ENCODE measurements at regions of chr14 and their contacts with region 1.

Region 1: DNA sequence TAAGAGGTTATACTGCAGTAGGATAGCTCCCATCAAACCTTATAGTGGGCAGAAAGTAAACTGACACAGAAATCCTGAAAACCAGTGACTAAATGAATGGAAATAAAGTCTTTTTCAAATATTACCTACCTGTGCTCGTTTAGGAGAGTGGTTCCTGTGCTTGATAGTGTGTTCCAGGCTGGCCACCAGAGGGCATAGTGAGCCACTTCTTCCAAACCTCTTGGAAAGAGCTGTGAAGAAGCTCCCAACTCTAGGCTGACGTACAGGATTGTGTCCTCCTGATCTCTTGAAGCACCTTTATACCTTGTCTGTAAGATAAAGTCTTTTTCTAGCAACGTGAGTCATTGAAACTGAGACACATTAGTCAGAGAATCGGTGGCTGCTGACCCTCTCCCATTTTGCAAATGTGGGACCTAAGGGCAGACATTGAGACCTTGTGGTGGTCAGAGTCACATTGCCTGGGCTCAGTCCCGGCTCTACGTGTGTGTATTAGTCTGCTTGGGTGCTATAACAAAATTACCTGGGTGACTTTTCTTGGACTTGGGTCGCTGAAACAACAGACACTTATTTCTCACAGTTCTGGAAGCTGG is 17.6 kb downstream of the TDP1 start:
- DNase-seq: peak; percentile 56
- ATAC-seq: peak; percentile 96
- H3K4me3 ChIP-seq: no peak overlapping the region
- H3K27ac ChIP-seq: no peak overlapping the region
- H3K4me1 ChIP-seq: no peaks in the 10 kb centered on the region
- H3K27me3 ChIP-seq: no peaks in the 10 kb centered on the region
- CTCF ChIP-seq: peak; percentile 82
- EP300 ChIP-seq: no peak
- POLR2A ChIP-seq: no peak
- RAD21 ChIP-seq: no peak

Region 2: DNA sequence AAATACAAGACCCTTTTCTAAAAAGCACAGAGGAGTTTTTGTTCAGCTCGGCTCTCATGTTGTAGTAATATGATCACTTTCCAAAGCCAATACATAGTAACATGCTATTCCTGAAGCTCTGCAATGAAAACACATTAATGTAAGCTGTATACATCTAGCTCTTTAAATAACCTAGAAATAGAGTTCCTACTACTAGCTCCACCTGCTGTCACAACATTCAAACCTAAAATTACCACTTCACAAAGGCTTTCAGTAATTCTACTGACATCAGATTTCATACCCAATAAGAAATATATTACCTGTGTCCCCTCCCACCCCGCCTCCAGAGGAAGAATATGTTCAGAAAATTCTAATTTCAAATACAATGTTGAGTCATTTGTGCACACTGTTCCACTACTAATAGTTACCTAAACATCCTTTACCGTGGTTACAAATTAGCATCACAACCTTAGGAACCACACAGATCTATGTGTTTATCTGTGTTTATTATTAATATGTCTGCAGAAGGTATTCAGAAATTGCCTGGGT is 36.6 kb before region 1 on chr14:
- CTCF ChIA-PET with region 1: no interaction called
- POLR2A ChIA-PET with region 1: no interaction called
- in situ Hi-C with region 1: no loop called
- intact Hi-C with region 1: loop called (anchors 1 kb)
- DNase-seq: no peak
- ATAC-seq: no peak
- H3K4me3 ChIP-seq: no peak overlapping the region
- H3K27ac ChIP-seq: no peak overlapping the region
- H3K4me1 ChIP-seq: no peaks in the 10 kb centered on the region
- H3K27me3 ChIP-seq: no peaks in the 10 kb centered on the region
- CTCF ChIP-seq: 0 out of 2 replicates have a peak, but pooled peaks have one; percentile 10
- EP300 ChIP-seq: no peak
- POLR2A ChIP-seq: no peak
- RAD21 ChIP-seq: no peak

Region 3: GRCh38 chr14:90060312-90060964 is 87.1 kb after region 1 on chr14:
- CTCF ChIA-PET with region 1: interaction called, 10 read pairs
- POLR2A ChIA-PET with region 1: no interaction called
- in situ Hi-C with region 1: loop called (anchors 5 kb)
- intact Hi-C with region 1: loop called (anchors 1 kb)
- DNase-seq: peak; percentile 34
- ATAC-seq: peak; percentile 84
- H3K4me3 ChIP-seq: peak overlapping the region; percentile 51 to 72 (median 60)
- H3K27ac ChIP-seq: no peak overlapping the region
- H3K4me1 ChIP-seq: peaks cover 24% of the 10 kb centered on the region
- H3K27me3 ChIP-seq: peaks cover 3 to 37% of the 10 kb centered on the region in 2 experiments
- CTCF ChIP-seq: peak; percentile 79
- EP300 ChIP-seq: no peak
- POLR2A ChIP-seq: no peak
- RAD21 ChIP-seq: peak; percentile 78; the same call in 1 of the 2 replicates

Region 4: GRCh38 chr14:90235179-90235976 is 262.0 kb after region 1 on chr14:
- CTCF ChIA-PET with region 1: interaction called, 36 read pairs
- POLR2A ChIA-PET with region 1: no interaction called
- in situ Hi-C with region 1: loop called (anchors 25 kb)
- intact Hi-C with region 1: loop called (anchors 1 kb)
- DNase-seq: peak; percentile 13
- ATAC-seq: peak; percentile 94
- H3K4me3 ChIP-seq: no peak overlapping the region
- H3K27ac ChIP-seq: no peak overlapping the region
- H3K4me1 ChIP-seq: peaks cover 5% of the 10 kb centered on the region; the same call in 1 of the 2 replicates
- H3K27me3 ChIP-seq: peaks cover 0 to 6% of the 10 kb centered on the region in 2 experiments; a peak in 2 of 5 replicates
- CTCF ChIP-seq: peak; percentile 90
- EP300 ChIP-seq: no peak
- POLR2A ChIP-seq: no peak
- RAD21 ChIP-seq: peak; percentile 83